ACHN (cell line): ENCODE measurements at regions of chr10 and their contacts with region 1.

Region 1: GRCh38 chr10:97759158-97759887 is 12.5 kb downstream of the SFRP5 start:
- DNase-seq: peak; percentile 71

Region 2: DNA sequence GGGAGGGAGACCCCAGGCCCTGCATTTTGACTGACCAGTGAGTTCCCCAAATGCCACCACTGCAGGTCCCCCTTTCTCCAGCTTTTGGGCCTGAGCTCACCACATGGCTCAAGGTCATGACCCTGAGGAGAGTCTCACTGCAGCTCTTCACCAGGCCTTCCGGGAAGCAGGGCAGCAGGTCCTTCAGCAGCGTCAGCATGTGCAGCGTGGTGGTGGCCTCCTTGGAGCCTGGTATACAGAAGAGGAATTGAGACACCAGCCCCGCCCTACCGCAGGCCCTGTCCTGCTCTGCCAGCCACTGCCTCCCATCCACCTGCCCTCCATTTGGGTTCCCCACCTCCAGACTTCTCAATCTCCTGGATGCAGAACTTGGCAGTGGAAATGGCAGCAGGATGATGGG is 371.2 kb before region 1 on chr10:
- in situ Hi-C with region 1: no loop called
- DNase-seq: no peak

Region 3: DNA sequence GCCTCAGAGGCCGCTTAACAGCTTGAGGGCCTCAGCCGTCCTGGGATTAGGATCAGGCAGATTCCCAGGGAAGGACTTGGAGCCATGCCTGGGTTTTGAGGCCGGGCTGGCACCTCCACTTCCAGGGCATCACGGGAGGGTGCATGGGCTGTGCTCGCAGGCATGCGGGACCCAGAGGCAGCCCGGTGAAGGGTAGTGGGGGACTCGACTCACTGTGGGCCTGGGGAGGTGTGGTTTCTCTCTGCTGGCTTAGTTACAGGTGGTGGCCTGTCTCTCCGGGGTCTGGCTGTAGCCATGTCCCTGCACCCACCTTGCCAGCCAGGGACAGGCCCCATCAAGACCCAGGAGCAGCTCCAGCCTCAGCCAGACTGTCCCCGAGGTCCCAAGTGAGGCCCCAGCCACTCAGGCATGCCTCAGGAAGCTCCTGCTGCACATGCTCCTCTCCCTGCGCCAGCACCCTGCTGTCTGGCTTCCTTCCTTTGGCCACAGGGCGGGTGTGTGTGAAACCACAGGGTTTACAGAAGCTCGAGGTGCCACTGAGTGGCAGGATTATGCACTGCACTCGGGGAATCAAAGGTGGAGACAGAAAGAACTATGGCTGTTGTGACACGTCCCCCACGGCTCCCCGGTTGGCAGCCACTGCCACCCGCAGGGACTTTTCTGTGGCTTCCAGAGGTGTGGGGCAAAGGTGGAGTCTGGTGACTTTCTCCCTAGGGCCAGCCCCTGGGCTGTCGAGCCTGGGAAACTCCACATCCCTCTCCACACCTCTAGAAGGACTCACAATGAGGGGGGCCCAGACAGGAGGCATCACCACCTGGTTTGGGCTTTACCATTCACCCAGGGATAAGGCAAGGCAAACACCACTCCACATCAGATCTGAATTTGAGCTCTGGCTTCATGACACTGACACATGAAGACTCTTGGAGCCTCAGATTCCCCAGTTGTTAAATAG is 110.0 kb after region 1 on chr10:
- in situ Hi-C with region 1: loop called (anchors 25 kb)
- DNase-seq: peak; percentile 95